Prostate gland (tissue), 2 donors: ENCODE measurements at regions of chr3 and their contacts with region 1.

Region 1: DNA sequence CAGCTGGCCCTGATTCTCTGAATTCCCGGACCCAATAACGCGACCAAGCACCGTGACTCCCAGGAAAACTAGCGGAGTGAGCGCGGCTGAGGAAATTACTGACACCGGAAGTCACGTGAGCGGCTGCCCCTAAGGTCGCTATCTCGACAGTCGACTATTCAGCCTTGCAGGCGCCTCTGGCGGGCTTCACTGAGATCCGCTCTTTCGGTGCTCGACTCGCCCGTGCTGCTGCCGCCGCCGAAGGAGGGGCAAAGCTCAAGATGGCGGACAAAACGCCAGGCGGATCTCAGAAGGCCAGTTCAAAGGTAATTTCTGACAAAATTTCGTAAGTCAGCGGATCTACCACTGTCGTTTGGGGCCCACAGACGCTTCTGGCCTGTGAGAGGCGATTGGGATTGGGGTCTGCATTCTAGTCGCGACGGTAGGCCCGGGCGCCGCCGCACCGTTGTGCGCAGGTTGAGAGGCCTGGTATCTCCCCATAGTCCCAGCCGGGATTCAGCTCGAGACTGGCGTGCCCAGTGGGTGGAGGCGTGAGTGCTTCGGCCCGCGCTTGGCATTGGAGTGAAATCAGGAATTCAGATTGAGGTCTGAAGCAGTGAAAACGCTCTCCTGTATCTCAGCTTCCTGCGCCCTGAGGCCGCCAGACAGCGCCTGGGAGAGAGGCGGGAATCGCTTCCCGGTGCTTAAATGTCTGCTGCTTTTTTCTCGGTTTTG is at the start of gene U2SURP:
- DNase-seq: peak; percentile 98
- H3K4me3 ChIP-seq: peak within 1 kb of the TSS; percentile 80 to 94
- H3K27ac ChIP-seq: peak within 1 kb of the TSS; percentile 89 to 91
- H3K4me1 ChIP-seq: no peaks in the 10 kb centered on the region
- H3K27me3 ChIP-seq: no peaks in the 10 kb centered on the region
- CTCF ChIP-seq: peak in 2 of 4 experiments; percentile 45 to 54
- POLR2A ChIP-seq: peak; percentile 65
- total RNA-seq, gene U2SURP: 38.3 to 59.4 TPM

Region 2: GRCh38 chr3:141431411-141432378 is 1569.8 kb before region 1 on chr3:
- intact Hi-C with region 1: loop called (anchors 10 kb)
- DNase-seq: peak; percentile 56
- H3K4me3 ChIP-seq: no peak overlapping the region
- H3K27ac ChIP-seq: peak overlapping the region; percentile 76 to 84
- H3K4me1 ChIP-seq: peaks cover 7% of the 10 kb centered on the region
- H3K27me3 ChIP-seq: no peaks in the 10 kb centered on the region
- CTCF ChIP-seq: no peak
- POLR2A ChIP-seq: no peak

Region 3: GRCh38 chr3:142148792-142149672 is 852.5 kb before region 1 on chr3 and contains the start of gene TFDP2:
- intact Hi-C with region 1: no loop called
- DNase-seq: peak; percentile 95
- H3K4me3 ChIP-seq: peak within 1 kb of the TSS; percentile 79 to 90
- H3K27ac ChIP-seq: peak within 1 kb of the TSS; percentile 92 to 95
- H3K4me1 ChIP-seq: no peaks in the 10 kb centered on the region
- H3K27me3 ChIP-seq: no peaks in the 10 kb centered on the region
- CTCF ChIP-seq: peak in 1 of 4 experiments; percentile 25
- POLR2A ChIP-seq: peak; percentile 88
- total RNA-seq, gene TFDP2: 102 to 128 TPM

Region 4: DNA sequence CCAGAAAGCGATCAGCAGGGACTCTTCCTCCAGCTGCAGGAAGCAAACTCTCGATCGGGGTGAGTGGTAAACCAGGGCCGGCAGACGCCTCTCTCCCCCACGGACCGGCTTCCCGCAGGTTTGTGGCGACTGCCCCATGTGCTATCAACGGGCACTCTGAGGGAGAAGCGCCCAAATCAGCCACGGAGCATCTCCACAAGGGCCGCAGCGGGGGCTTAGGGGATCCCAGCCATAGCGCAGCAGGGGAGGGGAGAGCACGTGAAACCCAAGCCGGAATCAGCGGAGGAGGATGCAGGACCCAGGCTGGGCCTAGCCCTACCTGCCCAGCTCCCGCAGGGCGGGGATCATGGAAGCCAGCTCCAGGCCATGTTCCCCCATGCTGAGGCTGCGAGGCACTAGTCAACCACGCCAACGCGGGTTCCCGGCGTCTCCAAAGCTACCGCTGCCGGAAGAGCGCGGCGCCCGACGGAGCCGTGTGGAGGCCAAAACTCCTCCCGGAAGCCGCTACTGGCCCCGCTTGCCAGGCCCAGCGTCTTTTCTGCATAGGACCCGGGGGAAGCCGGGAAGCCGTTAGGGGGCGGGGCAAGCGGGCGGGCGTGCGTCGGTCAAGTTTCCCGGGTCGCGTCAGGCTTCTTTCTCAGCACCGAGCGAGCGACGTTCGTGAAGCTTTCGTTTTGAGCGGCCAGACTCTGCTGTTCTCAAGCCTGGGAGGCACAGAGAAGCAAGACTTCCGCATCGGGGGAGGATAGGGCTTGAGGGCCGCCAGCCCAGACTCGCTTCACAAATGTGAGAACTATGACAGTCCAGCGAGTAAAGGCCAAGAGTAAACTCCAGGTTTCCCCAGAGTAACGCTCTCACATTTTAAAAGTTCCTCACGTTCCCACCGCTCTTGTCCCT is 423.0 kb before region 1 on chr3 and contains the start of gene ATR:
- intact Hi-C with region 1: loop called (anchors 1 kb)
- DNase-seq: peak; percentile 96
- H3K4me3 ChIP-seq: peak within 1 kb of the TSS; percentile 71 to 82
- H3K27ac ChIP-seq: peak within 1 kb of the TSS; percentile 88 to 95
- H3K4me1 ChIP-seq: no peaks in the 10 kb centered on the region
- H3K27me3 ChIP-seq: no peaks in the 10 kb centered on the region
- CTCF ChIP-seq: peak in 2 of 4 experiments; percentile 27 to 28
- POLR2A ChIP-seq: peak; percentile 75
- total RNA-seq, gene ATR: 35.6 to 36.1 TPM

Region 5: GRCh38 chr3:142723968-142724681 is 277.4 kb before region 1 on chr3 and contains the start of gene TRPC1:
- intact Hi-C with region 1: loop called (anchors 10 kb)
- DNase-seq: peak; percentile 58
- H3K4me3 ChIP-seq: peak within 1 kb of the TSS; percentile 70 to 81
- H3K27ac ChIP-seq: peak within 1 kb of the TSS; percentile 70 to 83
- H3K4me1 ChIP-seq: no peaks in the 10 kb centered on the region
- H3K27me3 ChIP-seq: no peaks in the 10 kb centered on the region
- CTCF ChIP-seq: no peak
- POLR2A ChIP-seq: peak; percentile 77
- total RNA-seq, gene TRPC1: 8.1 to 12.8 TPM

Region 6: GRCh38 chr3:142857056-142857455 is 144.5 kb before region 1 on chr3:
- intact Hi-C with region 1: no loop called
- DNase-seq: no peak
- H3K4me3 ChIP-seq: no peak overlapping the region
- H3K27ac ChIP-seq: no peak overlapping the region
- H3K4me1 ChIP-seq: no peaks in the 10 kb centered on the region
- H3K27me3 ChIP-seq: no peaks in the 10 kb centered on the region
- CTCF ChIP-seq: peak in 1 of 4 experiments; percentile 7
- POLR2A ChIP-seq: no peak